Activated naive CD4-positive, alpha-beta T cell treated with anti-CD3 and anti-CD28 coated beads for 36 hours (primary cell): ENCODE measurements at regions of chr19 and their contacts with region 1.

Region 1: GRCh38 chr19:48152551-48152950 is 17.6 kb downstream of the LIG1 start:
- DNase-seq: peak; percentile 79
- H3K4me3 Mint-ChIP-seq: no peak overlapping the region
- H3K27ac Mint-ChIP-seq: no peak overlapping the region
- H3K4me1 Mint-ChIP-seq: no peaks in the 10 kb centered on the region
- H3K27me3 Mint-ChIP-seq: no peaks in the 10 kb centered on the region

Region 2: DNA sequence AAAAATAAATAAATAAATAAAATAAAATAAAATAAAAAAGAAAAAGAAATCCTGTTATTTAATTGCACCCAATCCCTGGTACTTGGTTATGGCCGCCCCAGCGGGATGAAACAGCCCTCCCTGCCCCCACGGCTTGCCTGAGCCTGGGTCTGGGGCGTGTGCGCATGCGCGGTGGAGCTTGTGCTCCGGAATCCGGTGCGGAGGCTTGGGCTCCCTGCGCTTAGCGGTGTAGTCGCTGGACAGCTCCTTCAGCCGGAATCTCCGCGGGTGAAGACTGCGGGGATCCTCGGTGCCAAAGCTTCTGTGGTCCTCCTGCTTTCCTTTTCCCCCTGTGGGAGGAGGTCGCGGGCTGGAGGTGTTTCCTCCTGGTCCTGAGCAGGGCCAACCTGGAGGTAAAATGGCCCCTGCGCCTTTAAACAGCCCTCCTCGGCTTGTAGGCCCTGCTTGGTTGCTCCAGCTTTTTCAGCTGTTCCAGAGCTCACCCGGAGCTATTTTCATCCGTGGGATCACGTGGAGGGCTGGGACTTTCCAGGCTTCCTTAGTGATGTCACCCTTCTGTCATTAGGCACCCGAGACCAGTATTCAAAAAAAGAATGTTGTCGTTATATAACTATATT is 42.1 kb before region 1 on chr19 and contains the start of gene PLA2G4C:
- CTCF ChIA-PET with region 1: interaction called, 18 read pairs
- intact Hi-C with region 1: loop called (anchors 1 kb)
- DNase-seq: peak; percentile 89
- H3K4me3 Mint-ChIP-seq: peak within 1 kb of the TSS; percentile 85
- H3K27ac Mint-ChIP-seq: peak within 1 kb of the TSS; percentile 93
- H3K4me1 Mint-ChIP-seq: peaks cover 11% of the 10 kb centered on the region
- H3K27me3 Mint-ChIP-seq: no peaks in the 10 kb centered on the region
- total RNA-seq, gene PLA2G4C: 8.8 to 9.6 TPM